Ovary (tissue), 10 donors: ENCODE measurements at regions of chr5 and their contacts with region 1.

Region 1: GRCh38 chr5:57635146-57635777 is 152.7 kb upstream of the ACTBL2 start:
- DNase-seq: no peak
- H3K4me3 ChIP-seq: no peak overlapping the region
- H3K27ac ChIP-seq: no peak overlapping the region
- H3K4me1 ChIP-seq: no peaks in the 10 kb centered on the region
- H3K27me3 ChIP-seq: no peaks in the 10 kb centered on the region
- CTCF ChIP-seq: no peak
- EP300 ChIP-seq: no peak
- POLR2A ChIP-seq: no peak

Region 2: GRCh38 chr5:57598756-57599155 is 36.5 kb before region 1 on chr5:
- intact Hi-C with region 1: loop called in 1 of 4 experiments (anchors 1 kb)
- DNase-seq: no peak
- H3K4me3 ChIP-seq: no peak overlapping the region
- H3K27ac ChIP-seq: no peak overlapping the region
- H3K4me1 ChIP-seq: no peaks in the 10 kb centered on the region
- H3K27me3 ChIP-seq: no peaks in the 10 kb centered on the region
- CTCF ChIP-seq: no peak
- EP300 ChIP-seq: no peak
- POLR2A ChIP-seq: no peak

Region 3: GRCh38 chr5:57816108-57816507 is 180.8 kb after region 1 on chr5:
- intact Hi-C with region 1: no loop called
- DNase-seq: no peak
- H3K4me3 ChIP-seq: no peak overlapping the region
- H3K27ac ChIP-seq: no peak overlapping the region
- H3K4me1 ChIP-seq: no peaks in the 10 kb centered on the region
- H3K27me3 ChIP-seq: no peaks in the 10 kb centered on the region
- CTCF ChIP-seq: no peak
- EP300 ChIP-seq: no peak
- POLR2A ChIP-seq: no peak